Testis (tissue), 5 donors: ENCODE measurements at regions of chr7 and their contacts with region 1.

Region 1: GRCh38 chr7:74401137-74401859 is 52.4 kb upstream of the GTF2IRD1 start:
- DNase-seq: peak; percentile 85
- H3K4me3 ChIP-seq: no peak overlapping the region
- H3K27ac ChIP-seq: no peak overlapping the region
- H3K4me1 ChIP-seq: no peaks in the 10 kb centered on the region
- H3K27me3 ChIP-seq: no peaks in the 10 kb centered on the region
- CTCF ChIP-seq: peak; percentile 73 to 97 (median 91)
- POLR2A ChIP-seq: no peak

Region 2: DNA sequence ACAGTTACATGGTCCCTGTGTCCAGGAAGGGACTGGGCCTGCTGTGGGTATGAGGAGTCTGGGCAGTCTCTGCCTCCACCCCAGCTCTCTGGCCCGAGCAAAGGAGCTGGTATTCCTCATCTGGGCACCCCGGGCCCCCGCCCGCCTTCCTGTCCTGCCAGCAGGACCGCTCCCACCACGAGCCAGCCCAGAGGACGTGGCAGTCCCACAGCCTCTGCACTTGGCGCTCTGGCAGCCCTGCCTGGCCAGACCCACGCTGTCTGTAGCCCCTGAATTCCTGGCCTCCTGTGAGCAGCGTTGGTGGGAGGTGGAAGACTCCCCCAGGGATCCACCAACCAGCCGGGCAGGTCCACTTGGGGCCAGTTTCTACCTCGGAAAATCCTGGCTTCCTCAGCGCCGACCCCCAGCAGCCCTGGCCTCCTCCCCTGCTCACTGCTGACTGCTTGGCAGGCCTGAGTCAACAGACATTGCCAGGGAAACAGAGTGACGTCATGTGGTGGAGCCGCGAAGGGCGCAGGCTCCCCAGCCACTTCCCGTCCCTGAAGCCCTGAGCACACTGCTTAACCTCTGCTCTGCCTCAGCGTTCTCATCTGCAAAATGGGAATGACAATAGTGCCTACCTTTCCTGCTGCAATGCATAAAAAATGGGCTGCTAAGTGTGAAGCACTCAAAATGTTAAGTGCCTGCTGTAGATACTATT is 339.3 kb before region 1 on chr7:
- intact Hi-C with region 1: loop called (anchors 10 kb)
- DNase-seq: peak; percentile 82
- H3K4me3 ChIP-seq: no peak overlapping the region
- H3K27ac ChIP-seq: peak overlapping the region; percentile 77 to 85
- H3K4me1 ChIP-seq: peaks cover 9% of the 10 kb centered on the region
- H3K27me3 ChIP-seq: no peaks in the 10 kb centered on the region
- CTCF ChIP-seq: no peak
- POLR2A ChIP-seq: no peak

Region 3: GRCh38 chr7:74206589-74207120 is 194.6 kb before region 1 on chr7:
- intact Hi-C with region 1: loop called (anchors 5 kb)
- DNase-seq: peak; percentile 91
- H3K4me3 ChIP-seq: no peak overlapping the region
- H3K27ac ChIP-seq: no peak overlapping the region
- H3K4me1 ChIP-seq: no peaks in the 10 kb centered on the region
- H3K27me3 ChIP-seq: no peaks in the 10 kb centered on the region
- CTCF ChIP-seq: peak; percentile 92 to 98 (median 96)
- POLR2A ChIP-seq: no peak